Activated T-helper 2 cell treated with anti-CD3 and anti-CD28 coated beads, Interferon-gamma antibody, Interleukin-2, Interleukin-4, amounts not matched to agents 10 μg/mL and 5 μg/mL and 100 μg/mL, durations not matched to agents 14 hours and 24 hours and 36 hours (primary cell): ENCODE measurements at regions of chr7 and their contacts with region 1.

Region 1: GRCh38 chr7:56051339-56052191 is at the starts of genes CCT6A and PSPH:
- DNase-seq: peak; percentile 87
- H3K4me3 Mint-ChIP-seq: peak within 1 kb of the TSS; percentile 95
- H3K27ac Mint-ChIP-seq: peak within 1 kb of the TSS; percentile 93
- H3K4me1 Mint-ChIP-seq: peaks cover 36% of the 10 kb centered on the region
- H3K27me3 Mint-ChIP-seq: no peaks in the 10 kb centered on the region
- total RNA-seq, gene CCT6A: 259 and 263 TPM in 2 replicates
- total RNA-seq, gene PSPH: 18.4 and 20.8 TPM in 2 replicates

Region 2: GRCh38 chr7:55887821-55888247 is 163.7 kb before region 1 on chr7:
- intact Hi-C with region 1: loop called (anchors 1 kb)
- DNase-seq: no peak
- H3K4me3 Mint-ChIP-seq: peak overlapping the region; percentile 81
- H3K27ac Mint-ChIP-seq: peak overlapping the region; percentile 74
- H3K4me1 Mint-ChIP-seq: peaks cover 4% of the 10 kb centered on the region
- H3K27me3 Mint-ChIP-seq: no peaks in the 10 kb centered on the region

Region 3: GRCh38 chr7:55964261-55965099 is 87.1 kb before region 1 on chr7 and contains the start of gene NIPSNAP2:
- intact Hi-C with region 1: loop called (anchors 1 kb)
- DNase-seq: peak; percentile 55
- H3K4me3 Mint-ChIP-seq: peak within 1 kb of the TSS; percentile 86
- H3K27ac Mint-ChIP-seq: peak within 1 kb of the TSS; percentile 73
- H3K4me1 Mint-ChIP-seq: peaks cover 10% of the 10 kb centered on the region
- H3K27me3 Mint-ChIP-seq: no peaks in the 10 kb centered on the region
- total RNA-seq, gene NIPSNAP2: 52.3 and 56.3 TPM in 2 replicates

Region 4: DNA sequence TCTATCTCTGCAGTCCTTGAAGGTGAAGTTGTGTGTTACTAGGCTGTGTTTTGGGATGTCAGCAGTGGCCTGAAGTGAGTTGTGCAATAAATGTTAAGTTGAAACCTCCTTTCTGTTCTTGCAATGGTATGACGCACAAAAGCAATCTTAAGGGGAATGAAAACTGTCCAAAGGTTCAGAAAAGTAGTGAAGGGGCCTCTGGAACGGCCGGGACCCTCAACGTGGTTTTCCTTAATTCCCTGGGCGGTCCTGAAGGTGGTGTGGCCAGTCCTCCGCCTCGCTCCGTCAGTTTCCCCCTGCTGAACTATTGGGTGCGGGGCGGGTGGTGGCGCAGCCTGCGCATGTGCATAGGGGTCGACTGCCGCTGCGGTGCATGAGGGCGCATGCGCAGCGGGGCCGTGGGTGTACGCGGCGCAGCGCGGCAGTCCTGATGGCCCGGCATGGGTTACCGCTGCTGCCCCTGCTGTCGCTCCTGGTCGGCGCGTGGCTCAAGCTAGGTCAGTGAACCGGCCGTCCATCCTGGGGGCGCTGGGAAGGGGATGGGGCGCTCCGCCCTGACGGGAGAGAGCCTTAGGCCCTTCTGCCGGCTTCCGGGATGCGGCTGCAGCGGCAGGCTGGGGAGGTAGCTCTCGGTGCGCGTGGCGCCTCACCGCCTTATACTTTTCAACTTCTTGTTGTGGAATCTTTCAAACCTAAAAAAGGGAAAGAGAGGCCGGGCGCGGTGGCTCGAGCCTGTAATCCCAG is 12.5 kb after region 1 on chr7 and contains the start of gene SUMF2:
- intact Hi-C with region 1: loop called (anchors 1 kb)
- DNase-seq: peak; percentile 85
- H3K4me3 Mint-ChIP-seq: peak within 1 kb of the TSS; percentile 90
- H3K27ac Mint-ChIP-seq: peak within 1 kb of the TSS; percentile 78
- H3K4me1 Mint-ChIP-seq: peaks cover 38% of the 10 kb centered on the region
- H3K27me3 Mint-ChIP-seq: no peaks in the 10 kb centered on the region
- total RNA-seq, gene SUMF2: 153 and 158 TPM in 2 replicates